Cardiac septum (tissue), 1 donor: ENCODE measurements at regions of chr2 and their contacts with region 1.

Region 1: GRCh38 chr2:120675460-120676130 is 60.1 kb upstream of the GLI2 start:
- DNase-seq: peak; percentile 79

Region 2: GRCh38 chr2:120472891-120473309 is 202.7 kb before region 1 on chr2:
- intact Hi-C with region 1: no loop called
- DNase-seq: peak; percentile 39

Region 3: DNA sequence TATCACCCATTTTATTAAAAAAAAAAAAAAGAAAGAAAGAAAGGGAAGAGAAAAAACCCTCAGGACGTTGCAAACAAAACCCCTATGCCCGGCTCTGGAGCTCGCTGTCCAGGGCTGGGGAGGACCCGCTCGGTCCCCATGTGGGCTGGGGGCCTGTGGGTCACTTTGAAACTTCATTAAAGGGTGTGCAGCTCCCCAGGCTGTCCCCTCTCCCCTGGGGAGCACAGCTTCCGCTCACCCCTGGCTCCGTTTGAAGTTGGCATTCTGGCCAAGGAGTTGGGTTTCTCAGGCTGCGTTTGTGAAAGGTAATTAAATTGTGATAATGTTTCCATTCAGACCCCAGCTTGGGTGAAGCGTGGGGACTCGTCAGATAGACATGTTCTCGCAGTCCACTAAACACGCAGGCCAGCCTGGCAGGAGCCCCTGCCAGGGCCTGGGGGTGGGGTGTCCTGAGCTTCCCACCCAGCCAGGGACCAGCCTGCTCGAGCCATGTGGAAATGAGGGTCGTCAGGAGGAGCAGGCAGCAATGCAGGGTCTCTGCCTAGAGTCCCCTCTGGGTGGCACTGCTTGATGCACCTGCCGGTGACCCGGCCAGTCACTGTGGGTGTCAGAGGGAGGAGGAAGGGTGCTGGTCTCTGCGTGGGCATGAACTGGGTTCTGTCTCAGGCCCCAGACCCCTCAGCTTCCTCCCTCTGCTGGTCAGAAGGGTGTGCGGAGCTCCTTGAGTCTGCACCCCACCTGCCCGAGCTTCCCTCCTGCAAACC is 163.5 kb before region 1 on chr2:
- intact Hi-C with region 1: loop called (anchors 5 kb)
- DNase-seq: peak; percentile 68

Region 4: GRCh38 chr2:120586507-120587278 is 88.9 kb before region 1 on chr2:
- intact Hi-C with region 1: no loop called
- DNase-seq: no peak